Activated CD4-positive, alpha-beta memory T cell treated with anti-CD3 and anti-CD28 coated beads for 36 hours (primary cell): ENCODE measurements at regions of chr10 and their contacts with region 1.

Region 1: GRCh38 chr10:117174439-117175214 is 22.7 kb upstream of the KCNK18 start:
- DNase-seq: peak; percentile 91
- H3K4me3 Mint-ChIP-seq: peak overlapping the region; percentile 65
- H3K27ac Mint-ChIP-seq: no peak overlapping the region
- H3K4me1 Mint-ChIP-seq: peaks cover 14% of the 10 kb centered on the region
- H3K27me3 Mint-ChIP-seq: peaks cover 34% of the 10 kb centered on the region

Region 2: GRCh38 chr10:116742367-116743265 is 432.0 kb before region 1 on chr10 and contains the start of gene HSPA12A:
- CTCF ChIA-PET with region 1: no interaction called
- POLR2A ChIA-PET with region 1: no interaction called
- intact Hi-C with region 1: loop called (anchors 2 kb)
- DNase-seq: peak; percentile 59
- H3K4me3 Mint-ChIP-seq: no peak within 1 kb of the TSS
- H3K27ac Mint-ChIP-seq: no peak within 1 kb of the TSS
- H3K4me1 Mint-ChIP-seq: no peaks in the 10 kb centered on the region
- H3K27me3 Mint-ChIP-seq: peaks cover 61% of the 10 kb centered on the region
- total RNA-seq, gene HSPA12A: 0.40 to 0.41 TPM

Region 3: GRCh38 chr10:116796910-116797513 is 377.6 kb before region 1 on chr10:
- CTCF ChIA-PET with region 1: interaction called, 120 read pairs
- POLR2A ChIA-PET with region 1: no interaction called
- intact Hi-C with region 1: loop called (anchors 1 kb)
- DNase-seq: peak; percentile 76
- H3K4me3 Mint-ChIP-seq: no peak overlapping the region
- H3K27ac Mint-ChIP-seq: no peak overlapping the region
- H3K4me1 Mint-ChIP-seq: peaks cover 6% of the 10 kb centered on the region
- H3K27me3 Mint-ChIP-seq: peaks cover 31% of the 10 kb centered on the region

Region 4: DNA sequence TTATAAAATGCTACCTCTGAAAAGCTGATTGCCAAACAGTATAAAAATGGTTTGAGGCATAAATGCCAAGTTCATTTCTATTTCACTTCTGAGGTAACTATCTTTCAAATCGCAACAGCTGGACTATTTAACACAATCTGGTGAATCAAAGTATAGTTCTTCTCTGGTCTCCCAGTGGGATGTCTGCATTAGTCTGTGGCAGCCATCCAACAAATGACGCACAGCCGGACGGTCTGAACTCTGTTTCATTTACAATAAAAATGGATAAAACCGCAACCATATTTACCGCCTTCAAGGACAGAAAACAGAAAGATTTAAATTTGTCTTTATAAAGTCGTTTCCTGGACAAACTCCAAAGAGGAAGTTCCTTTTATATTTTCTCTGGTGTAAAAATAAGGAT is 283.4 kb before region 1 on chr10:
- CTCF ChIA-PET with region 1: interaction called, 10 read pairs
- POLR2A ChIA-PET with region 1: no interaction called
- intact Hi-C with region 1: no loop called
- DNase-seq: no peak
- H3K4me3 Mint-ChIP-seq: no peak overlapping the region
- H3K27ac Mint-ChIP-seq: no peak overlapping the region
- H3K4me1 Mint-ChIP-seq: no peaks in the 10 kb centered on the region
- H3K27me3 Mint-ChIP-seq: peaks cover 24% of the 10 kb centered on the region

Region 5: GRCh38 chr10:117137031-117137910 is 37.4 kb before region 1 on chr10:
- CTCF ChIA-PET with region 1: interaction called, 15 read pairs
- POLR2A ChIA-PET with region 1: no interaction called
- intact Hi-C with region 1: no loop called
- DNase-seq: no peak
- H3K4me3 Mint-ChIP-seq: no peak overlapping the region
- H3K27ac Mint-ChIP-seq: no peak overlapping the region
- H3K4me1 Mint-ChIP-seq: peaks cover 23% of the 10 kb centered on the region
- H3K27me3 Mint-ChIP-seq: peaks cover 71% of the 10 kb centered on the region

Region 6: GRCh38 chr10:117885206-117885829 is 710.7 kb after region 1 on chr10:
- CTCF ChIA-PET with region 1: no interaction called
- POLR2A ChIA-PET with region 1: no interaction called
- intact Hi-C with region 1: no loop called
- DNase-seq: no peak
- H3K4me3 Mint-ChIP-seq: no peak overlapping the region
- H3K27ac Mint-ChIP-seq: no peak overlapping the region
- H3K4me1 Mint-ChIP-seq: no peaks in the 10 kb centered on the region
- H3K27me3 Mint-ChIP-seq: peaks cover 5% of the 10 kb centered on the region